ENCODE measurements at regions of chr11 and their contacts with region 1.

Region 1: GRCh38 chr11:128399251-128400121 is 187.9 kb downstream of the ETS1 start:
- DNase-seq: no peak
- H3K4me3 ChIP-seq: no peak overlapping the region
- H3K27ac ChIP-seq: no peak overlapping the region
- H3K4me1 ChIP-seq: peaks cover 0 to 21% (median 17%) of the 10 kb centered on the region in 4 donors
- H3K27me3 ChIP-seq: no peaks in the 10 kb centered on the region
- CTCF ChIP-seq: no peak
- EP300 ChIP-seq: no peak
- POLR2A ChIP-seq: no peak

Region 2: DNA sequence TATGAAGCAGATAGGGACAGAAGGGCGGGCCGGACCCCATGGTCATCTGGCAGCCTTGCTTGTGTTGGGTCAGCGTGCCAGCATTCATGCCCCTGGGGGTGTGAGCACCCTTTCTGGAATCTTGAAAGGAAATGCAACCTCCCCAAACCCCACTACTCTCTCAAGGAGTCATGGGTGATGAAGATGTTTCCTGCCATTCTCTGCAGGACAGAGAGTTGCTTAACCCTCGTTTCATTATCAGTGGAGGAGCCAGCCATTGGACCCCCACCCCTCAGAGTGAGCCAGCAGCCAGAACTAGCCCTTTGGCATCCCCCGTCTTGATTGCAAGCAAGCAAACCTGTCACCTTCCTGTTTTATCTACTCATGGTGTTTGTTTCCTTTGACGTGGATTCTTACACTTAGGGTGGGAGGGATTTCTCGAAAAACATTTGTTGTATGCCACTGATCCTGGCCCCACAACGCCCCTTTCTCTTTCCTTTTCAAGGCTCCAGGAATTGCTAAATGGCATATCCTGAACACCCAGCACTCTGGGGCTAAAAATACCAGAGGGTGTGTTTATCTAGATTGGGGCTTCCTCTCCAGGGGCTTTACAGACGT is 70.4 kb before region 1 on chr11:
- intact Hi-C with region 1: no loop called
- DNase-seq: no peak
- H3K4me3 ChIP-seq: no peak overlapping the region
- H3K27ac ChIP-seq: peak overlapping the region in 3 of 4 donors; percentile 30 to 40 (median 34)
- H3K4me1 ChIP-seq: peaks cover 0 to 17% (median 2%) of the 10 kb centered on the region in 4 donors
- H3K27me3 ChIP-seq: no peaks in the 10 kb centered on the region
- CTCF ChIP-seq: no peak
- EP300 ChIP-seq: peak; percentile 55
- POLR2A ChIP-seq: no peak

Region 3: GRCh38 chr11:128455766-128456165 is 56.3 kb after region 1 on chr11:
- intact Hi-C with region 1: loop called (anchors 2 kb)
- DNase-seq: no peak
- H3K4me3 ChIP-seq: no peak overlapping the region
- H3K27ac ChIP-seq: peak overlapping the region in 1 of 4 donors; percentile 20
- H3K4me1 ChIP-seq: peaks cover 19 to 44% (median 33%) of the 10 kb centered on the region in 4 donors
- H3K27me3 ChIP-seq: no peaks in the 10 kb centered on the region
- CTCF ChIP-seq: no peak
- EP300 ChIP-seq: no peak
- POLR2A ChIP-seq: no peak